ENCODE measurements at regions of chr12 and their contacts with region 1.

Region 1: DNA sequence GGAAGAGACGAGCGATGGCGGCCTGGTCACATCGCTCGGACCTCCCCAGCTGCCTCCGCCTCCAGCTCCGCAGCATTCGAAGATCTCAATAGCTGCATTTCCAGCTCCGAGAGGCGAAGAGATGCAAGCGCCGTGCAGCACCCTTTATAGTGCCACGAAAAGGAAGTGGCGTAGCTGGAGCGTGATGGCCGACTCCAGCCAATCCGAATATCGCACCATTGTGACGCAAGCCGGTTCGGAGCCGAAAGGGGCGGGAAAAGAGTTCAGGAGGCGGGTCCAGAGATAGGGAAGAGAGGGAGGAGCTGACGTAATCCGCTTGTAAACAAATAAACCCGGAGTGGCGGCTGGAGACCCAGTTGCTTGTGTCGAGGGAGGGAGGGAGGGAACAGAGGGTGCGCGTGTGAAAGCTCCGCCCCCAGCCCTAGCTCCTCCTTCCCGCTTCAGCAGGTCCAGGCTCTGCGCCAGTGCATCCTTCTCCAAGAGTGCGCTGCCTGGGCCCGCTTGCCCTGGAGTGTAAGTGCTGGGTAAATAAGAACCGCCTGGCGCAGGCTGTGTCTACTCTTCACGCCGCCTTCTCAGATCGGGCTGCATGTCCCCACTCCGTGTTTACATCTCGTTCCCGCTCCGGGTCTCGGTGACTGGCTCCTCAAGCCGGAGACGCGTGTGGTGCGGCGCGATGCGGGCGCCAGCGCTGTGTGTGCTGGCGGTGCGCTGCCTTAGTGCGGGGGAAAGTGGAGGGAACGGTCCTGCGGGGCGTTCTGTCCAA is at the start of gene BTG1:
- DNase-seq: peak; percentile 96 to 100 (median 98)
- ATAC-seq: peak; percentile 68
- H3K4me3 ChIP-seq: peak within 1 kb of the TSS; percentile 94
- H3K4me3 Mint-ChIP-seq: peak within 1 kb of the TSS; percentile 100
- H3K27ac ChIP-seq: peak within 1 kb of the TSS; percentile 88 to 98
- H3K27ac Mint-ChIP-seq: peak within 1 kb of the TSS; percentile 99
- H3K4me1 ChIP-seq: peaks cover 4% of the 10 kb centered on the region
- H3K4me1 Mint-ChIP-seq: peaks cover 39% of the 10 kb centered on the region
- H3K27me3 ChIP-seq: no peaks in the 10 kb centered on the region
- H3K27me3 Mint-ChIP-seq: peaks cover 15% of the 10 kb centered on the region
- CTCF ChIP-seq: no peak
- total RNA-seq, gene BTG1: 1,698 to 1,774 TPM

Region 2: GRCh38 chr12:91778938-91779400 is 366.9 kb before region 1 on chr12:
- CTCF ChIA-PET with region 1: interaction called, 3 read pairs
- POLR2A ChIA-PET with region 1: interaction called, 33 read pairs
- intact Hi-C with region 1: no loop called
- DNase-seq: peak; percentile 3 to 75 (median 31)
- ATAC-seq: peak; percentile 75
- H3K4me3 ChIP-seq: peak overlapping the region; percentile 30
- H3K4me3 Mint-ChIP-seq: peak overlapping the region; percentile 78
- H3K27ac ChIP-seq: peak overlapping the region; percentile 67 to 72
- H3K27ac Mint-ChIP-seq: peak overlapping the region; percentile 87
- H3K4me1 ChIP-seq: peaks cover 5% of the 10 kb centered on the region
- H3K4me1 Mint-ChIP-seq: peaks cover 57% of the 10 kb centered on the region
- H3K27me3 ChIP-seq: no peaks in the 10 kb centered on the region
- H3K27me3 Mint-ChIP-seq: no peaks in the 10 kb centered on the region
- CTCF ChIP-seq: no peak

Region 3: DNA sequence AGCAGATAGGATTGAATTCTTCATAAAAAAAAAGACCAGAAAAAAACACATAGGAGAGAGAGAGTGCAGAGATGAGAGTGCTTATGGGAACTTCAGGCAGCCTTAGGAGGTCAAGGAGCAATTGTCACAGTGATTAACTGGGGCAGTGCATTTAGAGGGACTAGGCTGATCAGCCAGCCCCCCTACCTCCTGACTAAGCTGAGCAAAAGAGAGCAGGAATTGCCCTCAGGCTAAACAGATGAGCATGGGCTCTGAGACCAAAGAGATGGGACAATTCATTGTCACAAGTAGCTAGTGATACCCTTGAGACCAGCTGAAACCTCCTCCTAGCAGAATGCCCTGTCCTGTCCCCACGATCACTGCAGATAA is 124.3 kb before region 1 on chr12:
- CTCF ChIA-PET with region 1: interaction called, 3 read pairs
- POLR2A ChIA-PET with region 1: interaction called, 11 read pairs
- intact Hi-C with region 1: no loop called
- DNase-seq: no peak
- ATAC-seq: no peak
- H3K4me3 ChIP-seq: no peak overlapping the region
- H3K4me3 Mint-ChIP-seq: no peak overlapping the region
- H3K27ac ChIP-seq: no peak overlapping the region
- H3K27ac Mint-ChIP-seq: peak overlapping the region; percentile 55
- H3K4me1 ChIP-seq: peaks cover 9% of the 10 kb centered on the region
- H3K4me1 Mint-ChIP-seq: peaks cover 45% of the 10 kb centered on the region
- H3K27me3 ChIP-seq: no peaks in the 10 kb centered on the region
- H3K27me3 Mint-ChIP-seq: no peaks in the 10 kb centered on the region
- CTCF ChIP-seq: no peak

Region 4: DNA sequence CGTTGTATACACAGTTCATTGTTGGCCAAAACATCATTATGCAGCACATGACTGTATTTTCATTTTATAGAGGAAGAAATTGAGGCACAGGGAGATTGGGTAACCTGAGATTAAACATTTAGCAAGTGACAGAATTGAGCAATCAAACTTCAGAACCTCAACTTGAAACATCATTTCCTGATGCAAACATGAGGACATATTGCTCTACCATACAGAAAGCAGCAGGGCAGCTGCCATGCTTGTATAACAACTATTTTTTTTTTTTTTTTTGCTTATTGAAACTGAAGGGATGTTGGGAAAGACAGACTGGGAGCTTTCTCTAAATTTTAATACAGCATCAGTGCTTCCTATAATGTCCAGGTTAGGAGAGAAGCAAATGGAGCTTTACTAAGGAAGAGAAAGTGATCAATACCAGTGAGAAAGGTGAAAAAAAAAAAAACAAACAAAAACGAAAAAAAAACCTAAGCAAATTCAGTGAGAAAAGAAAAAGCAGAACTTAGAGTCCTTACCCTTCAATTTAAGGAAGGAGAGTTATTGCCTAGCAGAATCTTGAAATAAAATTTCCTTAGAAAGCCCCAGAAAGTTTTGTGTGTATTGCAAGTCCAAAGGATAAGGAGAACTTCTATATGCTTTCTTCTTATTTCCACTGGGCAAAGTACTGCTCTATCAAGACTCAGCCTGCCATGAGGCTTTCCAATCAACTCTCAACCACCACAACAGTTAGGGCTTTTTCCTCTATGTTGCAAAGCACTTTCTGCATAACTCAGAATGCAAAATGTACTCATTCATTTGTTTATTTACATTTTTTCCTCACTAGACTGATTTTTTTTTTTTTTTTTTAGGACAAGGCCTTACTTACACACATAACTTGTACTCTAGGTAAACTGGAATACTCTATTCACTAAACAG is 21.9 kb before region 1 on chr12:
- CTCF ChIA-PET with region 1: interaction called, 6 read pairs
- POLR2A ChIA-PET with region 1: interaction called, 298 read pairs
- intact Hi-C with region 1: loop called in 1 of 2 experiments (anchors 2 kb)
- DNase-seq: no peak
- ATAC-seq: peak; percentile 13
- H3K4me3 ChIP-seq: no peak overlapping the region
- H3K4me3 Mint-ChIP-seq: peak overlapping the region; percentile 43
- H3K27ac ChIP-seq: no peak overlapping the region
- H3K27ac Mint-ChIP-seq: peak overlapping the region; percentile 76
- H3K4me1 ChIP-seq: peaks cover 18% of the 10 kb centered on the region
- H3K4me1 Mint-ChIP-seq: peaks cover 72% of the 10 kb centered on the region
- H3K27me3 ChIP-seq: no peaks in the 10 kb centered on the region
- H3K27me3 Mint-ChIP-seq: no peaks in the 10 kb centered on the region
- CTCF ChIP-seq: no peak

Region 5: GRCh38 chr12:92244036-92244435 is 98.1 kb after region 1 on chr12:
- CTCF ChIA-PET with region 1: no interaction called
- POLR2A ChIA-PET with region 1: interaction called, 19 read pairs
- intact Hi-C with region 1: no loop called
- DNase-seq: no peak
- ATAC-seq: no peak
- H3K4me3 ChIP-seq: no peak overlapping the region
- H3K4me3 Mint-ChIP-seq: no peak overlapping the region
- H3K27ac ChIP-seq: no peak overlapping the region
- H3K27ac Mint-ChIP-seq: peak overlapping the region; percentile 0
- H3K4me1 ChIP-seq: no peaks in the 10 kb centered on the region
- H3K4me1 Mint-ChIP-seq: peaks cover 26% of the 10 kb centered on the region
- H3K27me3 ChIP-seq: no peaks in the 10 kb centered on the region
- H3K27me3 Mint-ChIP-seq: no peaks in the 10 kb centered on the region
- CTCF ChIP-seq: no peak

Region 6: GRCh38 chr12:92396647-92397252 is 250.8 kb after region 1 on chr12:
- CTCF ChIA-PET with region 1: no interaction called
- POLR2A ChIA-PET with region 1: interaction called, 210 read pairs
- intact Hi-C with region 1: loop called in 1 of 2 experiments (anchors 5 kb)
- DNase-seq: peak in 1 of 14 experiments; percentile 29
- ATAC-seq: no peak
- H3K4me3 ChIP-seq: no peak overlapping the region
- H3K4me3 Mint-ChIP-seq: peak overlapping the region; percentile 52
- H3K27ac ChIP-seq: peak overlapping the region; percentile 72 to 80
- H3K27ac Mint-ChIP-seq: peak overlapping the region; percentile 95
- H3K4me1 ChIP-seq: peaks cover 81% of the 10 kb centered on the region
- H3K4me1 Mint-ChIP-seq: peaks cover 99% of the 10 kb centered on the region
- H3K27me3 ChIP-seq: no peaks in the 10 kb centered on the region
- H3K27me3 Mint-ChIP-seq: no peaks in the 10 kb centered on the region
- CTCF ChIP-seq: no peak

Region 7: GRCh38 chr12:92649511-92650227 is 503.8 kb after region 1 on chr12:
- CTCF ChIA-PET with region 1: interaction called, 4 read pairs
- POLR2A ChIA-PET with region 1: interaction called, 9 read pairs
- intact Hi-C with region 1: loop called in 1 of 2 experiments (anchors 2 kb)
- DNase-seq: peak; percentile 33 to 85 (median 50)
- ATAC-seq: peak; percentile 91
- H3K4me3 ChIP-seq: no peak overlapping the region
- H3K4me3 Mint-ChIP-seq: no peak overlapping the region
- H3K27ac ChIP-seq: no peak overlapping the region
- H3K27ac Mint-ChIP-seq: no peak overlapping the region
- H3K4me1 ChIP-seq: peaks cover 3% of the 10 kb centered on the region
- H3K4me1 Mint-ChIP-seq: no peaks in the 10 kb centered on the region
- H3K27me3 ChIP-seq: no peaks in the 10 kb centered on the region
- H3K27me3 Mint-ChIP-seq: no peaks in the 10 kb centered on the region
- CTCF ChIP-seq: peak; percentile 81

Region 8: DNA sequence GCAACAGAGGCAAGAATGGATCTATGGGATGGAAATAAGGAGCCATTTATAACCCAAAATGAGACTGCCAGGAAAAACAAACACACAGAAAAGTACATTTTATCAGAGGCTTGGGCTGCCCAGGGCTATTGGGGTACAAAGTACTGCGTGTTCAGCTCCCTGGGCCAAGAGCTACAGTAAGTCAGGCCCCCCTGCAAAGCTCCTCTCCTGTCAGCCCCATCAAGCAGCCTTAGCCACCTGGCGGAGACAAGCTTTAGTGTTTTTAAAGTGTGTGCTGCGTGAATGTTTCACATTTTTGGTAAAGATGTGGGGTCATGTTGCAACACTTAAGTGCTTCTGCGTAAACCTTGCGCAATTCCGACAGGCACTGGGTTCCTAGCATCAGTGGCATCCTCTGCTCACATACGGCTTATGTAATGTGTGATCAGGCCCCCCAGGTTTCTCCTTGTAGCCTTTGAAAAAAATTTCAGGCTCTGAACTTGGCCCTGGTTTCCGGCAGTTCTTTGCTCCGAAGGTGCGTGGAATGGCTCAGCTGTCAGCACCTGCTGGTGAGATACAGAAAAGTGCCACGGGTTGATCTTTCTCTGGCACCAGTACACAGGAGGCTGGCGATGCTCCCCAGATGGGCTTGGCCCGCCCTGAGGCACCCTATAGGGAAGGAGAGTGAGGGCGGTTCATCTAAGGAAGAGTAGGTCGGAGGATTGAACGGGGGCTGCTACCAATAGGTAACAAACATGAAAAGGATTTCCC is 981.8 kb after region 1 on chr12:
- CTCF ChIA-PET with region 1: no interaction called
- POLR2A ChIA-PET with region 1: no interaction called
- intact Hi-C with region 1: no loop called
- DNase-seq: peak in 2 of 14 experiments; percentile 36 to 38
- ATAC-seq: no peak
- H3K4me3 ChIP-seq: no peak overlapping the region
- H3K4me3 Mint-ChIP-seq: no peak overlapping the region
- H3K27ac ChIP-seq: no peak overlapping the region
- H3K27ac Mint-ChIP-seq: no peak overlapping the region
- H3K4me1 ChIP-seq: no peaks in the 10 kb centered on the region
- H3K4me1 Mint-ChIP-seq: no peaks in the 10 kb centered on the region
- H3K27me3 ChIP-seq: no peaks in the 10 kb centered on the region
- H3K27me3 Mint-ChIP-seq: no peaks in the 10 kb centered on the region
- CTCF ChIP-seq: no peak